ENCODE measurements at regions of chr17 and their contacts with region 1.

Region 1: GRCh38 chr17:19362277-19363113 is at the start of gene B9D1:
- DNase-seq: peak; percentile 97 to 99
- ATAC-seq: peak; percentile 79 to 93
- H3K4me3 ChIP-seq: peak within 1 kb of the TSS; percentile 82
- H3K27ac ChIP-seq: peak within 1 kb of the TSS; percentile 94 to 96
- H3K4me1 ChIP-seq: peaks cover 16% of the 10 kb centered on the region; the same call in 2 of the 3 replicates
- CTCF ChIP-seq: peak; percentile 100
- EP300 ChIP-seq: no peak
- POLR2A ChIP-seq: peak; percentile 47
- RAD21 ChIP-seq: peak; percentile 100
- polyA plus RNA-seq, gene B9D1: 60.6 and 65.6 TPM in 2 replicates

Region 2: DNA sequence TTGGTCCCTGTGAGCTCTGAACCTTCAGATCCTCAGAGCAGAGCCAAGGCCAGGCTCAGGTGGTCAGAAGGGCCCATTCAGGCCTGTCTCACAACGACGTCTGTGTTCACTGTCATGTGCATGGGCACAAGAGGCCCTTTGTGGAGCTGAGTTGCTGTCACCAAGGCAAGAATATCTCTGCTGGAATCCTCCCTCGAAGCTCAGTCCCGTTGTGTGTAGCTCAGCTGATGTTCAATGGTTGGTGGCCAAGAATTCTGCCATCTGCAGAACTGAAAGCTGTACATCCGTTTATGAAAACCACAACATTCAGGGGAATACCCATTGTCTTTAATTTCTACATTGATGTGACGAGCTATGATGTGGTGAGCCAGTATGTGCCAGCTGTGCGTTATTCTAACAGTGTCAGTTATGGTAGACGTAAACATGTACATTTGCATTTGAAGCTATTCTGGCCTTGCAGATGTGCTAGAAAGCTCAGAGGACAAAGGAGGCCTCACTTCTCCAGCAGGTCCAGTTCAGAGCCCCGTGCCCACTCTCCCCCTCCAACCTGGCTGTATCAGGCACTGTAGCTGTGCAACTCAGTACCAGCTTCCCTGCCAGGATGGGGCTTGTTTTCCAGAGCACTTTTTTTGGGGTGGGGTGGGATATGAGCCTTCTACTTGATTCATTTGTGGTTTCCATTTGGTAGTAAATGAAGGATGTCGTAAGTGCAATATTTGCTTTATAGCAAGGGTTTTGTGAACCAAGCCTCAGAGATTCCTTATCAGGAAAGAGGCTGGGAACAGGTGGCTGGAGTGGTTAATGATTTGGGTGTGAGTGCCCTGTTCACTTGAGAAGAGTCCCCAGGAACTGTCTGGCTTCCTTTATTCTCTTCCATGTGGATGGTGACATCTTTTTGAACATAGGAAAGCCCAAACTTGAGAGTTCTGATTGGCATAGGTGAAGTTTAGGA is 56.1 kb before region 1 on chr17:
- CTCF ChIA-PET with region 1: no interaction called
- POLR2A ChIA-PET with region 1: no interaction called
- DNase-seq: no peak
- ATAC-seq: no peak
- H3K4me3 ChIP-seq: no peak overlapping the region
- H3K27ac ChIP-seq: no peak overlapping the region
- H3K4me1 ChIP-seq: no peaks in the 10 kb centered on the region
- CTCF ChIP-seq: no peak
- EP300 ChIP-seq: no peak
- POLR2A ChIP-seq: no peak
- RAD21 ChIP-seq: no peak

Region 3: DNA sequence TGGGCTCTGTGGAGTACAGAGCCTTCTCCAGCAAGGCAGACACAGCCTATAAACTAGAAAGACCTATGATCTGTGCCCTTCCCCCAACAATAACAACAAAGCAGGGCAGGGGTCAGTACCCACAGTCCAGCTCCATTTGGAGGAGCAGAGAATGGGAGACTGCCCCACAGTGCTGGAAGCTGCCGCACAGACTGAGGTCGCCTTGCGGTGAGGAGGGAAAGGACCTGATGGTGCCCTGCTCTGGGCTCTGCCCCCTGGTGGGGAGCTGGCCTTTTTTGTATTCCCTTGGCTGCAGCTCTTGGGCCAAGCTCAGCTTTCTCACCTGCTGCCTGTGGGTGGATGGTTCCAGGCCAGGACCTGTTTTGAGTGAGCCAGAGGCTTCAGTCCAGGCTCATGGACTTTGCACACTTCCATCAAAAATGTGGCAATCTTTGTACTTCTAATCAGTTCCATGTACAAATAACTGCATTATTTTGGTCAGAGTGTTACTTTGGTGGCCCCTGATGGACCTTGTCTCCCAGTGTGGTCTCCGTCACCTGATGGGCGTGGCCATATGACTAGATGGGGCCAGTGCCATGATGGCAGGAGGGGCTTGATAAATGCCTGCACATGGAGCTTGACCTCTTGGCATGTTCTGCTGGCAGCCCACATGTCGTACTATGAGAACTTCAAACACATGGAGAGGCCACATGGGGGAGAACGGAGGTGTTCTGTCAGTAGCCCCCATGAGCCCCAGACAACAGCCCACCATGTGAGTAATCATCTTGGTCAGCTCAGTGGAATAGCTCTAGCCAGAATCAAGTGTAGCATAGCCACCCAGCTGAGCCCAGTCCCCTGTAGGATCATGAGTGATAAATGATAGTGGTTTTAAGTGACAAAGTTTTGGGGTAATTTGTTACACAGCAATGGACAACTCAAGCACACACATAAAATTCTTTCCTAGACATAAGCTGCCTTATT is 24.2 kb before region 1 on chr17:
- CTCF ChIA-PET with region 1: interaction called, 28 read pairs
- POLR2A ChIA-PET with region 1: no interaction called
- DNase-seq: peak; percentile 73 to 82
- ATAC-seq: peak; percentile 67 to 80
- H3K4me3 ChIP-seq: no peak overlapping the region
- H3K27ac ChIP-seq: no peak overlapping the region; a peak in 1 of 6 replicates
- H3K4me1 ChIP-seq: peaks cover 5% of the 10 kb centered on the region; the same call in 2 of the 3 replicates
- CTCF ChIP-seq: peak; percentile 58
- EP300 ChIP-seq: no peak
- POLR2A ChIP-seq: no peak
- RAD21 ChIP-seq: peak; percentile 44 to 51; a peak in 4 of 5 replicates

Region 4: GRCh38 chr17:19405114-19405513 is 42.6 kb after region 1 on chr17:
- CTCF ChIA-PET with region 1: interaction called, 35 read pairs
- POLR2A ChIA-PET with region 1: no interaction called
- DNase-seq: no peak
- ATAC-seq: no peak
- H3K4me3 ChIP-seq: no peak overlapping the region
- H3K27ac ChIP-seq: no peak overlapping the region
- H3K4me1 ChIP-seq: no peaks in the 10 kb centered on the region
- CTCF ChIP-seq: no peak
- EP300 ChIP-seq: no peak
- POLR2A ChIP-seq: no peak
- RAD21 ChIP-seq: no peak

Region 5: DNA sequence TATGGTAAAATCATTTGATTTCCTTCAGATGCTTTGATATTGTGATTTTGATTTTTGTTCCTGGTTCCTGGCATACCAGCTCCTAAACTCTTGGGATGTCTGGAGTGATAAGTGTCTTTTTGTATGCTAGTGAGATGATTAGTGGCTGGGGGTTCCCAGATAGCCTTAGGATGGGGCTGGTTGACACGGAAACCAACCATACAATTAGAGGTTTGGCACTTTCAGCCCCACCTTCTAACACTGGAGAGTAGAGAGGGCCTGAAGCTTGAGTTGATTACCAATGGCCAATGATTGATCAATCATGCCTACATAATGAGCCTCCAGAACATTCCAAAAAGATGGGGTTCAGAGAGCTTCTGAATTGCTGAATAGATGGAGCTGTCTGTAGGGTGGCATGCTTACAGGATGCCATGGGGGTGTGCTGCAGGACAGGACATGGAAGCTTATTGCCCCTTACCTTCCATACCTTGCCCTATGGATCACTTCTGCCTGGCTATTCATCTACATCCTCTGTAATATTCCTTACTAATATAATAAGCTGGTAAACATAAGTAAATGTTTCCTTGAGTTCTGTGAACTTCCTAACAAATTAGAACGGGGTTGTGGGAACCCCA is 71.3 kb after region 1 on chr17:
- CTCF ChIA-PET with region 1: interaction called, 20 read pairs
- POLR2A ChIA-PET with region 1: no interaction called
- DNase-seq: no peak
- ATAC-seq: peak in 1 of 2 experiments; percentile 26; a peak in 1 of 6 replicates
- H3K4me3 ChIP-seq: no peak overlapping the region
- H3K27ac ChIP-seq: no peak overlapping the region
- H3K4me1 ChIP-seq: no peaks in the 10 kb centered on the region
- CTCF ChIP-seq: no peak
- EP300 ChIP-seq: no peak
- POLR2A ChIP-seq: no peak
- RAD21 ChIP-seq: 0 out of 5 replicates have a peak, but pooled peaks of 1 of the 2 experiments have one; percentile 11

Region 6: DNA sequence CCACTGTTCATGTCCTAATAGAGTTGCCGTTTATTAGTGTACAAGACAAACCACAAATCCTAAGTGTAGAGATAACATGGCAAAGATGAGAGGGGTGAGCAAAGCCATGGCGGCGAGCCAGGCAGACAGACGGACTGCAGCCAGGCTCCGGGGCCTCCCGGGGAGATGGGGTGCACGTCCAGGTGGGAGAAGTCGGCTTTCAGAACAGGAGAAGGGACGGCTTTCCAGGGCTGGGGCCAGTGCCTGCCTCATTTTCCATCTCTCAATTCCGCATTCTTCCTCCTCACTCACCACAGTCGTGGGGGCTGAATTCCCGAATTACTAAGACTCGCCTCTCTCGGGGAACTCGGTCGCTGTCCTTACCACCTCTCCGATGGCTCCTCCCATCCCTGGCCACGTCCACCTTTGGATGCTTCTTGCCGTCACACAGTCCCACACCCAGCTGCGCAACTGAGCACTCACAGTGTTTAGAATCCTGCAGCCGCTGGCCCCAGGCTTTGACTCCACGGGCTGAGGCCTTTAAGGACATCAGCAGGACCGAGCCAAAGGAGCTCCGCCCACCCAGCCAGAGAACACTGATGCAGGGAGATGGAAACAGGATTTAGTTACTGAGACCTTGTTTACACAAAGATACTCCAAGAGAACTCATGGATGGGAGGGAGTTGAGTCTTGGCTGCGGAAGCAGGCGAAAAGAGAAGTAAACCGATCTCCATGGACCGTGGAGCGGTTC is 108.2 kb after region 1 on chr17:
- CTCF ChIA-PET with region 1: interaction called, 20 read pairs
- POLR2A ChIA-PET with region 1: interaction called, 3 read pairs
- DNase-seq: no peak
- ATAC-seq: 0 out of 6 replicates have a peak, but pooled peaks of 1 of the 2 experiments have one; percentile 31
- H3K4me3 ChIP-seq: no peak overlapping the region
- H3K27ac ChIP-seq: no peak overlapping the region
- H3K4me1 ChIP-seq: no peaks in the 10 kb centered on the region
- CTCF ChIP-seq: no peak
- EP300 ChIP-seq: no peak
- POLR2A ChIP-seq: no peak
- RAD21 ChIP-seq: no peak

Region 7: GRCh38 chr17:19753049-19753444 is 390.6 kb after region 1 on chr17:
- CTCF ChIA-PET with region 1: interaction called, 18 read pairs
- POLR2A ChIA-PET with region 1: interaction called, 7 read pairs
- DNase-seq: peak; percentile 98 to 99
- ATAC-seq: peak; percentile 83 to 90
- H3K4me3 ChIP-seq: no peak overlapping the region; the same call in 2 of the 3 replicates
- H3K27ac ChIP-seq: peak overlapping the region; percentile 98 to 100
- H3K4me1 ChIP-seq: peaks cover 65% of the 10 kb centered on the region
- CTCF ChIP-seq: no peak
- EP300 ChIP-seq: peak; percentile 87 to 96; a peak in 4 of 5 replicates
- POLR2A ChIP-seq: peak; percentile 54
- RAD21 ChIP-seq: peak in 1 of 2 experiments; percentile 41; a peak in 2 of 5 replicates

Measured in A549 (cell line).